ENCODE measurements at regions of chr4 and their contacts with region 1.

Region 1: GRCh38 chr4:109298279-109299010 is 4.0 kb downstream of the COL25A1 start:
- DNase-seq: peak; percentile 14
- H3K4me3 Mint-ChIP-seq: no peak overlapping the region
- H3K27ac Mint-ChIP-seq: no peak overlapping the region
- H3K4me1 Mint-ChIP-seq: peaks cover 7% of the 10 kb centered on the region
- H3K27me3 Mint-ChIP-seq: peaks cover 9% of the 10 kb centered on the region
- CTCF ChIP-seq: peak; percentile 48

Region 2: GRCh38 chr4:108683479-108683878 is 615.0 kb before region 1 on chr4:
- CTCF ChIA-PET with region 1: no interaction called
- intact Hi-C with region 1: loop called (anchors 2 kb)
- DNase-seq: no peak
- H3K4me3 Mint-ChIP-seq: no peak overlapping the region
- H3K27ac Mint-ChIP-seq: no peak overlapping the region
- H3K4me1 Mint-ChIP-seq: no peaks in the 10 kb centered on the region
- H3K27me3 Mint-ChIP-seq: no peaks in the 10 kb centered on the region
- CTCF ChIP-seq: no peak

Region 3: GRCh38 chr4:108834835-108835384 is 463.5 kb before region 1 on chr4:
- CTCF ChIA-PET with region 1: no interaction called
- intact Hi-C with region 1: loop called (anchors 1 kb)
- DNase-seq: no peak
- H3K4me3 Mint-ChIP-seq: no peak overlapping the region
- H3K27ac Mint-ChIP-seq: no peak overlapping the region
- H3K4me1 Mint-ChIP-seq: no peaks in the 10 kb centered on the region
- H3K27me3 Mint-ChIP-seq: no peaks in the 10 kb centered on the region
- CTCF ChIP-seq: no peak

Region 4: DNA sequence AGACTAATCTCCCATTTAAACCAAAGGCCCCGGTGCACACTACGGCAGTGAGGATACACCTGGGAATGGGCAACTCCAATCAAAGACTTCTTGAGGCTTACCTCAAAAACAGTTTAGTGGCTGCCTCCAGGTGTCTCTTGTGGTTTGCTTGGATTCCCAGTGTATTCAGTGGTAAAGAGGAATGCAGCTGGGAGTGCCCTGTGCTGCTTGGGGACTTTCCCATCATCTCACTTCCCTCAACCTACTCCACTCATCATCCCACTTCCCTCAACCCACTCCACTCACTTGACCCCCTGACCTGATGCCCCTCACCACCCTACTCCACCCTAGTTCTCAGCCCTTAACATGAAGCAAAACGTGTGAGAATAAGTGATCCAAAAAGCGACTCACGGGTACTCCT is 358.3 kb before region 1 on chr4:
- CTCF ChIA-PET with region 1: no interaction called
- intact Hi-C with region 1: loop called (anchors 5 kb)
- DNase-seq: peak; percentile 32
- H3K4me3 Mint-ChIP-seq: no peak overlapping the region
- H3K27ac Mint-ChIP-seq: no peak overlapping the region
- H3K4me1 Mint-ChIP-seq: no peaks in the 10 kb centered on the region
- H3K27me3 Mint-ChIP-seq: no peaks in the 10 kb centered on the region
- CTCF ChIP-seq: no peak

Region 5: GRCh38 chr4:109009909-109010308 is 288.5 kb before region 1 on chr4:
- CTCF ChIA-PET with region 1: no interaction called
- intact Hi-C with region 1: no loop called
- DNase-seq: no peak
- H3K4me3 Mint-ChIP-seq: no peak overlapping the region
- H3K27ac Mint-ChIP-seq: no peak overlapping the region
- H3K4me1 Mint-ChIP-seq: peaks cover 10% of the 10 kb centered on the region
- H3K27me3 Mint-ChIP-seq: no peaks in the 10 kb centered on the region
- CTCF ChIP-seq: no peak

Region 6: GRCh38 chr4:109067508-109068210 is 230.8 kb before region 1 on chr4:
- CTCF ChIA-PET with region 1: no interaction called
- intact Hi-C with region 1: no loop called
- DNase-seq: no peak
- H3K4me3 Mint-ChIP-seq: no peak overlapping the region
- H3K27ac Mint-ChIP-seq: no peak overlapping the region
- H3K4me1 Mint-ChIP-seq: no peaks in the 10 kb centered on the region
- H3K27me3 Mint-ChIP-seq: no peaks in the 10 kb centered on the region
- CTCF ChIP-seq: no peak

Region 7: GRCh38 chr4:109078724-109079123 is 219.7 kb before region 1 on chr4:
- CTCF ChIA-PET with region 1: no interaction called
- intact Hi-C with region 1: loop called (anchors 5 kb)
- DNase-seq: peak; percentile 1
- H3K4me3 Mint-ChIP-seq: peak overlapping the region; percentile 10
- H3K27ac Mint-ChIP-seq: peak overlapping the region; percentile 42
- H3K4me1 Mint-ChIP-seq: no peaks in the 10 kb centered on the region
- H3K27me3 Mint-ChIP-seq: no peaks in the 10 kb centered on the region
- CTCF ChIP-seq: no peak

Region 8: DNA sequence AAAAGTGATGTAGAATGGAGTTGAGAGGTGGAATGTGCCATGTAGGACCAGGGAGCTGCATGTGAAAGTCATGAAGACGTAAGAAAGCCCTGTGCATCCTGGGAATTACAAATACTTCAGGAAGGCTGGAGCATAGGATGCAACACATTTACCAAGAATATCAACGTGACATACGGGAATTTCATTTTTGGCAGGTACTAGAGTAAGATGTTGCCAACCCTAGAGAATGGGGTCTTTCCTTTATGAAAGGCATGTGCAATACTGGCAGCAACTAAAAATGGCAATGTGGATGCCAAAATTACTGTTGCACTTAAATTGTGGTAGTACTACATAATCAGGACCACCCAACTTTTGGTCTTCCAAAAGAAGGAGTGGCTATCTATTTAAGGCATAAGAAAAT is 183.9 kb before region 1 on chr4:
- CTCF ChIA-PET with region 1: no interaction called
- intact Hi-C with region 1: no loop called
- DNase-seq: no peak
- H3K4me3 Mint-ChIP-seq: no peak overlapping the region
- H3K27ac Mint-ChIP-seq: no peak overlapping the region
- H3K4me1 Mint-ChIP-seq: no peaks in the 10 kb centered on the region
- H3K27me3 Mint-ChIP-seq: no peaks in the 10 kb centered on the region
- CTCF ChIP-seq: no peak

Measured in Calu3 (cell line).